ENCODE measurements at regions of chr2 and their contacts with region 1.

Region 1: GRCh38 chr2:85551698-85552678 is 9.3 kb downstream of the GGCX start:
- DNase-seq: peak; percentile 91
- H3K4me3 Mint-ChIP-seq: no peak overlapping the region
- H3K27ac Mint-ChIP-seq: no peak overlapping the region
- H3K4me1 Mint-ChIP-seq: peaks cover 3% of the 10 kb centered on the region
- H3K27me3 Mint-ChIP-seq: no peaks in the 10 kb centered on the region

Region 2: DNA sequence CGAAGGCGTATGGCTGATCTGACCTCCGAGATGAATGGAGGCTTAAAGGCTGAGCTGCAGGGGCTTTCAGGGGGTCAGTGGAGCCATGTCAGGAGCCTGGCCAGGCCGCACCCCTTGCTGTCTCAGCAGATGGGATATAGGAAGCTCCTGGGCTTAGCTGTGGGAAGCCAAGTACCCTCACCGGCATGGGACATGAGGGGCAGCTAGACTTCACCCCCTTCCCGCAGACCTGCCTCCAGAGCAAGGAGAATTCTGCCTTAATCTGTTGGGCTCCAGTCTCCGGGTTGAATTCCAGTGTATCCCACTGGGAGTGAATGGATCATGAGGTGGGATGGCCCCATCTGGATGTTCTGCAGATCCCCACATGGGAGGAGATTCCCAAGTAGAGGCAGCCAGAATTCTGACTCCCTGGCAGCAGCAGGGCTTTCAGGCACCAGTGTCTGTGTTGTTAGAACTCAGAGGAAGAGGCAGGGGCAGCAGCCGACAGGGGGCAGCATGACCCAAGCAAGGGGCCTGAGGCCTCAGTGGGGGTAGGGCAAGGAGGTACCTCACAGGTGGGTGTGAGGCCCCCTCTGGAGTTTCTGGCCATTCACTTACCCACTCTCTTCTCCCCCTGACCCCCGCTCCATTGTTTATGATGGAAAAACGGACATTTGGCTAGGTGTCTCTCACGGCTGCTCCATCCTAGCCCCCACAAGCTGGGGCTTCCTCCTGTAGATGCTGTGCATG is 160.9 kb before region 1 on chr2:
- CTCF ChIA-PET with region 1: interaction called, 86 read pairs
- POLR2A ChIA-PET with region 1: no interaction called
- intact Hi-C with region 1: loop called (anchors 1 kb)
- DNase-seq: peak; percentile 75
- H3K4me3 Mint-ChIP-seq: no peak overlapping the region
- H3K27ac Mint-ChIP-seq: no peak overlapping the region
- H3K4me1 Mint-ChIP-seq: peaks cover 4% of the 10 kb centered on the region
- H3K27me3 Mint-ChIP-seq: no peaks in the 10 kb centered on the region

Region 3: DNA sequence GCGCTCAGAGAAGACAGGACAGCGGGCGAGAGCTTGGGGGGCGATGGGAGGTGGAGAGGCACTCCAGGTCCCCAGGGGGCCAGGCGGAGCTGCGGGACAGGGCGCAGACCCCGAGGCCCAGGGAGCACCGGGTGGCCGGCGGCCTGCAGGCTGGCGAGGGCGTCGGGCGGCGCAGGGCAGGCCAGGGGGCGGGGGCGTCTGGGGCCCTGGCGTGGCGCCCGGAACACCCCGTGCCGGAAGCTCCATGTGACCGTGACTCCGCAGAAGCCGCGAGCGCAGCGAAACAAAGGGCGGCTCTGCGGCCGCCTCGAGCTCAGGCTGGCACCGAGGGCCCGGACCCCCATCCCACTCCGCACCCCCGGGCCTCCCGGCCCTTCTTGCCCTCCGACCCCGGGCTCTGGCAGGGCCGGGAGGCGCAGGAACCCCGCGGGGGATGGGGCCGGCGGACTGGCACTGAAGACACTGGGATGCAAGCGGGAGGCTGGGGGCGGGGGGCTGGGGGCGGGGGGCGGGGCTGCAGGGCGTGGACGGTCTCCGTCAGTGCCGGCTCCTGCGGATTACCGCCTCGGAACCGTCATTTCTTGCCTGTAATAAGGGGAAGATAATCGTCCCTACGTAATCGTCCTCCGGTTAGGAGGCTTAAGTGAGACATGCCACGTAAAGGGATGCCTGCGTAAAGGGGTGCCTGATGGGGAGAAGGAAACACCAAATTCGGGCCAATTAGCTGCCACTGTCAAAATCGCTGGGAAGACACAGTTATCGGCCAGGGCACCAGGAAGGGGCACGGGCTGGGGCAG is 114.3 kb before region 1 on chr2:
- CTCF ChIA-PET with region 1: interaction called, 10 read pairs
- POLR2A ChIA-PET with region 1: interaction called, 4 read pairs
- intact Hi-C with region 1: no loop called
- DNase-seq: peak; percentile 86
- H3K4me3 Mint-ChIP-seq: peak overlapping the region; percentile 81
- H3K27ac Mint-ChIP-seq: peak overlapping the region; percentile 98
- H3K4me1 Mint-ChIP-seq: peaks cover 27% of the 10 kb centered on the region
- H3K27me3 Mint-ChIP-seq: no peaks in the 10 kb centered on the region

Region 4: GRCh38 chr2:85577386-85578242 is 25.6 kb after region 1 on chr2 and contains the start of gene VAMP8:
- CTCF ChIA-PET with region 1: interaction called, 10 read pairs
- POLR2A ChIA-PET with region 1: no interaction called
- intact Hi-C with region 1: no loop called
- DNase-seq: peak; percentile 83
- H3K4me3 Mint-ChIP-seq: peak within 1 kb of the TSS; percentile 95
- H3K27ac Mint-ChIP-seq: peak within 1 kb of the TSS; percentile 87
- H3K4me1 Mint-ChIP-seq: peaks cover 28% of the 10 kb centered on the region
- H3K27me3 Mint-ChIP-seq: no peaks in the 10 kb centered on the region
- total RNA-seq, gene VAMP8: 112 to 114 TPM